PC-3 (cell line): ENCODE measurements at regions of chr6 and their contacts with region 1.

Region 1: DNA sequence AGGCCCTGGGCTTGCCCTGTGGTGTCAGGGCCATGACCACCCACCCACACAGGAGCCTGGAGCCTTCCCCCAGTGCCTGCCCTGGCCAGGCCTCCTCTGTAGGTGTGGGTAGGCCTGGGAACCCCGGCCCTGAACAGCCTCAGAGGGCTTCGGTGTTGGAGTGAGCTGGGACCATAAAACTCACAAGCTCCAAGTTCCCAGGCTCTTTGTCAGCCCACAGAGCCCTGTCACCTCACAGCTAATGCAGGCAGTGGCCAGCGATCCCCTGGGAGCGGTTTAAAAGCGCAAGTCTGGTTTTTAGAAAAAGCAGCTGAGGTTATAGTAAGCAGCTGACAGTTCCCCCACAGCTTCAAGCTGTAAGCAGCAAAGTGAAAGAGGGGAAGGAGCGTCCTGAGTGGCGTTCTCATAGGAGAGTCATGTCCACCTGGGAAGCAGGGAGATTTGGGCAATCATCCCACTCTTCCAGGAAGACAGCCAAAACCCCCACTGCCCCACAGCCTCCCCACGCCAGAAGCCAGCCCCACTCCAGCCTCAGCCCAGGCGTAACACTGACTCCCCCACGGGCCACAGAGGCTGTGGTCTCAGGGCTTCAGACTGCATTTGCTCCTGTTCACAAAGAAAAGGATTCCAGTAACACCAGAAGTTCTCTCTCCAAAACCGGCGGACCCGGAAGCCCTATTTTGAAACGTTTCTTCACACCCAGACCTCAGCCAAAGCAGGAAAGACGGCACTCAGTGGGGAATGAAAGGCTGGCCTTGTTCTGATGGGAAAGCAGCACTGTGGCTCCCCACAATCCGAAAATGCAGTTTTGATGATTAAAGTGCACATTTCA is 34.3 kb upstream of the FOXC1 start:
- DNase-seq: no peak
- ATAC-seq: no peak
- H3K4me3 ChIP-seq: no peak overlapping the region
- H3K27ac ChIP-seq: no peak overlapping the region
- H3K4me1 ChIP-seq: no peaks in the 10 kb centered on the region
- H3K27me3 ChIP-seq: peaks cover 9% of the 10 kb centered on the region; the same call in 1 of the 2 replicates
- CTCF ChIP-seq: no peak

Region 2: DNA sequence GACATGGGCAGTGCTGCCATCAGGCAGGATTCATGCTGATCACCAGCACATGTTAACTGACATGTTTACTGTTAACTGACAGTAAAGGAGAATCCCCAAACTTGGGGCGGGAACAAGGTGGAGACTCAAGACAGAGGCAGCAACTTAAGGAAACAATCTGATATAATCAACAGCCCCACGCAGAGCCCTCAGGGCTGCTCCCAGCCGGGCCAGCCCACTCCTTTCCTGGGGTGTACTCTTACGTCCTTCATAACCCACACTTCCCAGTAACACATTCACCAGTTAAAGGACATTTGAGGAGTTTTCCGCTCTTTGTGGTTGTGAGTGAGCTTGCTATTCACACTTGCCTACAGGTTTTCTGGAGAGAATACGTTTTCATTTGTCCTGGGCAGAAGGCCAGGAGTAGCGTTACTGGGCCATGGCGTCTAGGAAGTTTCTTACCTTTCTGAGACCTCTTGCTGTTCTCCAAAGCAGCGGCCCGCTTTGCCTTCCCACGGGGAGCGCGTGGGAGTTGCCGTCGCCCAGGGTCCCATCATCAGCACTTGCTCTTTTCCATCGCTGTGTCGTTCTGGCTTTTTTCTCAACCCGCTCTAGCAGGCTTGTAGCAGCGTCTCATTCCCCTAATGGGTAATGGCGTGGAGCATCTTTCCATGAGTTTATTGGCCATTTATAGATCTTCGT is 129.6 kb before region 1 on chr6:
- CTCF ChIA-PET with region 1: no interaction called
- POLR2A ChIA-PET with region 1: interaction called, 21 read pairs
- intact Hi-C with region 1: no loop called
- DNase-seq: no peak
- ATAC-seq: no peak
- H3K4me3 ChIP-seq: no peak overlapping the region
- H3K27ac ChIP-seq: no peak overlapping the region
- H3K4me1 ChIP-seq: no peaks in the 10 kb centered on the region
- H3K27me3 ChIP-seq: peaks cover 62% of the 10 kb centered on the region
- CTCF ChIP-seq: no peak

Region 3: GRCh38 chr6:1525364-1526038 is 49.9 kb before region 1 on chr6:
- CTCF ChIA-PET with region 1: no interaction called
- POLR2A ChIA-PET with region 1: interaction called, 10 read pairs
- intact Hi-C with region 1: no loop called
- DNase-seq: no peak
- ATAC-seq: no peak
- H3K4me3 ChIP-seq: no peak overlapping the region
- H3K27ac ChIP-seq: no peak overlapping the region
- H3K4me1 ChIP-seq: no peaks in the 10 kb centered on the region
- H3K27me3 ChIP-seq: peaks cover 10% of the 10 kb centered on the region
- CTCF ChIP-seq: no peak